Mammary epithelial cell (primary cell): ENCODE measurements at regions of chr7 and their contacts with region 1.

Region 1: DNA sequence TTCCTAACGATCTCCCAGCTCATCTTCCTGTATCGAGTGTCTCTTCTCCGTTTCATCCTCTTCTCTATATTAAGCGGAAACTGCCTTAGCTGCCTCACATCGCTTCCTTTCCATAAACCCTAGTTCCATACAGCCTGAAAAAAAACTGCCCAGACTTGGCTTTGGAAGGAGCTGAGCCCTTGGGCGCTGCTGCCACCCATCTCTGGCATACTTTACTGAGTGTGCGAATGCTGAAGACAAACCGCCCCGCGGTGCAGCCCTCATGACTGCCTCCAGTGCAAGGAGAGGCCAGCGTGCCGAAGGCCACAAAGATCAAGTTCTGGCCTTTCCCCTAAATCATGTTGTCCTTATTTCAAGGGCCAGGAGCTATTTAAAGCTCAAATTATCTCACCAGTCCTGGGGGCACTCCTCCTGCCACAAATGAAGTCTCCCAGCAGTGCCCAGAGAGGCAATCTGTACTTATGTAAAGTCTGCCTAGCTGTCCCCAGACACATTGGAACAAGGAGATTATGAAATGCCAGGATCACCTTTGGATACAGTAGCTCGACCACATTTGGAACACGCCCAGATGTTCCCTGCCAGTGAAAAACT is 25.2 kb downstream of the YWHAG start:
- DNase-seq: no peak
- H3K4me3 ChIP-seq: no peak overlapping the region
- H3K27ac ChIP-seq: no peak overlapping the region
- H3K4me1 ChIP-seq: peaks cover 10% of the 10 kb centered on the region
- H3K27me3 ChIP-seq: no peaks in the 10 kb centered on the region
- CTCF ChIP-seq: no peak

Region 2: DNA sequence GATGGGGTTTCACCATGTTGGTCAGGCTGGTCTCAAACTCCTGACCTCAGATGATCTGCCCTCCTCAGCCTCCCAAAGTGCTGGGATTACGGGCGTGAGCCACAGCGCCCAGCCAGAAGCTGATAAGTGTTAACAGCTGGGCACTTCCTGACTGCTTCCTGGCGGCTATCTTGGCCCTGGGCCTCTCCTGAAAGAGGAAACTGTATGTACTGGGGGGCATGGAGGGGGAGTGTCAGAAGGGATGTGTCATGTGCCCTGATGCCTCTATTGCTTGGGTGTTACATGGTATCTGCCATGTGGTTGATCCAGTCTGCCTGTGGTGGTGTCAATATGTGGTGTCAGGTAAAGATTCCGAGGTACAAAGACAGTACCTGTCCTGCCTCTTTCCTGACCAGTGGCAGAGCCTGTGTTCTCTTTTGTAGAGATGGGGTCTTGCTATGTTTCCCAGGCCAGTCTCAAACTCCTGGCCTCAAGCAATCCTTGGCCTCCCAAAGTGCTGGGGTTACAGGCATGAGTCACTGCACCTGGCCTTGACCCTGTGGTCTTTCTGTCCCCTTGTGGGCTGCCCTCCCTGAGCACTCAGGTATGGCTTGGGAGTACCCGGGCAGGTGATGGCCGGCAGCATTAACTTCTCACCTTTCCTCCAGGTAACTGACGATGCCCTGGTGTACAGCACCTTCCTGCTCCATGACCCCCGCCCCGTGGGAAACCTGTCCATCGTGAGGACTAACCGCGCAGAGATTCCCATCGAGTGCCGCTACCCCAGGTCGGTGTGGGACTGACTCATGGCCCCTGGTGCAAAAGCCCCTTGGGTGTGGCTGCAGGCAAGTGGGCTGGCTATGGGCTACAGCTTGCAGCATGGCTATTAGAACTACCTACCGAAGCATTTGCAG is 95.5 kb after region 1 on chr7:
- CTCF ChIA-PET with region 1: no interaction called
- dilution Hi-C with region 1: loop called (anchors 5 kb)
- in situ Hi-C with region 1: no loop called
- intact Hi-C with region 1: loop called (anchors 5 kb)
- DNase-seq: no peak
- H3K4me3 ChIP-seq: no peak overlapping the region
- H3K27ac ChIP-seq: no peak overlapping the region
- H3K4me1 ChIP-seq: peaks cover 14% of the 10 kb centered on the region
- H3K27me3 ChIP-seq: no peaks in the 10 kb centered on the region
- CTCF ChIP-seq: no peak